MCF 10A (cell line): ENCODE measurements at regions of chr21 and their contacts with region 1.

Region 1: DNA sequence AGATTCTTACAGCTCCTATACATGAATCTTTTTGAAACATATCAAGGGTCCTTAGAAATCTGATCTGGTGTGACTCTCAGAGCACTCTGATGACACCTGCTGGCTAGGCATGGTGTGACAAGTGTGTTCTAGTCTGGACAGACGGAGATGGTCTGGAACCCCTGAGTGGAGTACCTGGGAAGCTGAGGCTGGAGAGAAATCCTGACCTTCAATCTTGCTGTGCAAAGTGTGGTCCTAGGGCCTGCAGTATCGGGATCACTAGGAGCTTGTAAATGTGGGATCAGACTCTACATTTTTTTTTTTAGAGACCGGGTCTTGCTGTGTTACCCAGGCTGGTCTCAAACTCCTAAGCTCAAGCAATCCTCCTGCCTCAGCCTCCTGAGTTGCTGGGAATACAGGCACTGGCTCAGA is 78.6 kb upstream of the SOD1 start:
- DNase-seq: peak; percentile 80
- H3K4me3 Mint-ChIP-seq: no peak overlapping the region
- H3K27ac Mint-ChIP-seq: no peak overlapping the region
- H3K4me1 Mint-ChIP-seq: no peaks in the 10 kb centered on the region
- H3K27me3 Mint-ChIP-seq: peaks cover 25% of the 10 kb centered on the region
- CTCF ChIP-seq: peak; percentile 95

Region 2: DNA sequence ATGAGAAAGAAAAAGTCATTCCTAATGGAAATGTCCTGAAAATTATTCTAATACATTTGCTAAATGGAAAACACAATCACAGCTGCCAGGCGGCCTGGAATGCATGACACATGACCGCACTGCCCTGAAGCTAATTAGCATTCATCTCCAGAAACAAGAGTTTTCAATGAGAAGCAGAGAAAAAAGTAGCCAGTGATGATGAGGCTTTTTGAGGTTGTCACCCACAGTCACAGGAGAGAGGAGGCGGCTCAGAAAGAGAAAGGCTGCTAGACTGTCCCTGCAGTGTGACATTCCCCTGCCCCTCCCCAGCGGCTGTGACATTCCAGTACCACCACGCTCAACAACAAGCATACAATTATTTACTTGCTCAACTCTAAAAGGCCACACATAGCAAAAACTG is 419.7 kb before region 1 on chr21:
- CTCF ChIA-PET with region 1: interaction called, 11 read pairs
- POLR2A ChIA-PET with region 1: interaction called, 3 read pairs
- intact Hi-C with region 1: no loop called
- DNase-seq: peak; percentile 18
- H3K4me3 Mint-ChIP-seq: no peak overlapping the region
- H3K27ac Mint-ChIP-seq: no peak overlapping the region
- H3K4me1 Mint-ChIP-seq: peaks cover 7% of the 10 kb centered on the region
- H3K27me3 Mint-ChIP-seq: no peaks in the 10 kb centered on the region
- CTCF ChIP-seq: no peak

Region 3: GRCh38 chr21:31198575-31198974 is 382.3 kb before region 1 on chr21:
- CTCF ChIA-PET with region 1: interaction called, 212 read pairs
- POLR2A ChIA-PET with region 1: no interaction called
- intact Hi-C with region 1: loop called (anchors 1 kb)
- DNase-seq: peak; percentile 67
- H3K4me3 Mint-ChIP-seq: no peak overlapping the region
- H3K27ac Mint-ChIP-seq: no peak overlapping the region
- H3K4me1 Mint-ChIP-seq: peaks cover 4% of the 10 kb centered on the region
- H3K27me3 Mint-ChIP-seq: no peaks in the 10 kb centered on the region
- CTCF ChIP-seq: peak; percentile 60

Region 4: GRCh38 chr21:31343680-31344480 is 237.0 kb before region 1 on chr21 and contains the start of gene TIAM1:
- CTCF ChIA-PET with region 1: interaction called, 52 read pairs
- POLR2A ChIA-PET with region 1: interaction called, 3 read pairs
- intact Hi-C with region 1: loop called (anchors 2 kb)
- DNase-seq: peak; percentile 86
- H3K4me3 Mint-ChIP-seq: peak within 1 kb of the TSS; percentile 96
- H3K27ac Mint-ChIP-seq: peak within 1 kb of the TSS; percentile 92
- H3K4me1 Mint-ChIP-seq: peaks cover 21% of the 10 kb centered on the region
- H3K27me3 Mint-ChIP-seq: no peaks in the 10 kb centered on the region
- CTCF ChIP-seq: no peak
- total RNA-seq, gene TIAM1: 9.0 and 9.8 TPM in 2 replicates

Region 5: GRCh38 chr21:31500071-31500470 is 80.8 kb before region 1 on chr21:
- CTCF ChIA-PET with region 1: interaction called, 10 read pairs
- POLR2A ChIA-PET with region 1: no interaction called
- intact Hi-C with region 1: no loop called
- DNase-seq: no peak
- H3K4me3 Mint-ChIP-seq: no peak overlapping the region
- H3K27ac Mint-ChIP-seq: no peak overlapping the region
- H3K4me1 Mint-ChIP-seq: peaks cover 4% of the 10 kb centered on the region
- H3K27me3 Mint-ChIP-seq: no peaks in the 10 kb centered on the region
- CTCF ChIP-seq: no peak

Region 6: DNA sequence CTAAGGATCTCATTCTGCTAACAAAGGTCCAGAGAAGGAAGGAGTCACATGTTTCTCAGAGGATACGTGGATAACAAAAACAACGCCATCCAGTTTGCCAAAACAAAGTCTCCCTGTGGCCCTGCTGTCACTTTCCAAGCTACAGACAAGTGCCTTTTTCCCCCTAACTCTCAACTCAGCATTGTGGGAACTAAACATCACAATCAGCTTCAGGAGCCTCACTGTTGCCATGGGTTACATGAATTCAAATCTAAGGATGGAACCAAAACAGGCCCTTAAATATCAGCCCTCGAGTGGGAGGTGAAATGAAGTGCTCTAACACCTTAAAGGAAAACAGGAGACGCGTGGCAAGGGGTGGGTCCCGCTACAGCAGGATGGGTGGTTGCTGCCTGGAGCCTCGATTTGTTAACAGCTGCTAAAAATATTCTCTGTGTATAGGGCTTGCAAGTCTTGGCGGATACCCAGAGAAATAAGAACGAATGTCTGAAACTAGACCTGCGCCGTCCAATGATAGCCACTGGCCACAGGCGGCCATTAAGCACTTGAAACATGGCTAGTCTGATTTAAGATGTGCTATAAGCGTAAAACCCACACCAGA is 12.2 kb after region 1 on chr21:
- CTCF ChIA-PET with region 1: interaction called, 51 read pairs
- POLR2A ChIA-PET with region 1: no interaction called
- intact Hi-C with region 1: no loop called
- DNase-seq: no peak
- H3K4me3 Mint-ChIP-seq: no peak overlapping the region
- H3K27ac Mint-ChIP-seq: no peak overlapping the region
- H3K4me1 Mint-ChIP-seq: no peaks in the 10 kb centered on the region
- H3K27me3 Mint-ChIP-seq: no peaks in the 10 kb centered on the region
- CTCF ChIP-seq: no peak